Activated B cell treated with CpG ODN at 0.5 μM for 24 hours (primary cell): ENCODE measurements at regions of chr19 and their contacts with region 1.

Region 1: GRCh38 chr19:38849860-38850435 is at the start of gene HNRNPL:
- DNase-seq: peak; percentile 99
- ATAC-seq: peak; percentile 61
- H3K4me3 Mint-ChIP-seq: peak within 1 kb of the TSS; percentile 93
- H3K27ac Mint-ChIP-seq: peak within 1 kb of the TSS; percentile 98
- H3K4me1 Mint-ChIP-seq: peaks cover 61% of the 10 kb centered on the region
- H3K27me3 Mint-ChIP-seq: no peaks in the 10 kb centered on the region
- CTCF ChIP-seq: no peak
- total RNA-seq, gene HNRNPL: 528 and 546 TPM in 2 replicates

Region 2: GRCh38 chr19:38323291-38323690 is 526.7 kb before region 1 on chr19:
- CTCF ChIA-PET with region 1: no interaction called
- POLR2A ChIA-PET with region 1: no interaction called
- intact Hi-C with region 1: no loop called
- DNase-seq: no peak
- ATAC-seq: no peak
- H3K4me3 Mint-ChIP-seq: no peak overlapping the region
- H3K27ac Mint-ChIP-seq: no peak overlapping the region
- H3K4me1 Mint-ChIP-seq: peaks cover 18% of the 10 kb centered on the region
- H3K27me3 Mint-ChIP-seq: no peaks in the 10 kb centered on the region
- CTCF ChIP-seq: no peak

Region 3: GRCh38 chr19:38374429-38375176 is 475.3 kb before region 1 on chr19 and contains the start of gene PSMD8:
- CTCF ChIA-PET with region 1: no interaction called
- POLR2A ChIA-PET with region 1: no interaction called
- intact Hi-C with region 1: loop called (anchors 1 kb)
- DNase-seq: peak; percentile 96
- ATAC-seq: peak; percentile 96
- H3K4me3 Mint-ChIP-seq: peak within 1 kb of the TSS; percentile 100
- H3K27ac Mint-ChIP-seq: peak within 1 kb of the TSS; percentile 96
- H3K4me1 Mint-ChIP-seq: peaks cover 25% of the 10 kb centered on the region
- H3K27me3 Mint-ChIP-seq: no peaks in the 10 kb centered on the region
- CTCF ChIP-seq: no peak
- total RNA-seq, gene PSMD8: 134 and 138 TPM in 2 replicates

Region 4: GRCh38 chr19:38736413-38737280 is 113.3 kb before region 1 on chr19:
- CTCF ChIA-PET with region 1: no interaction called
- POLR2A ChIA-PET with region 1: interaction called, 17 read pairs
- intact Hi-C with region 1: no loop called
- DNase-seq: peak; percentile 64
- ATAC-seq: peak; percentile 60
- H3K4me3 Mint-ChIP-seq: peak overlapping the region; percentile 71
- H3K27ac Mint-ChIP-seq: peak overlapping the region; percentile 12
- H3K4me1 Mint-ChIP-seq: peaks cover 38% of the 10 kb centered on the region
- H3K27me3 Mint-ChIP-seq: no peaks in the 10 kb centered on the region
- CTCF ChIP-seq: no peak

Region 5: DNA sequence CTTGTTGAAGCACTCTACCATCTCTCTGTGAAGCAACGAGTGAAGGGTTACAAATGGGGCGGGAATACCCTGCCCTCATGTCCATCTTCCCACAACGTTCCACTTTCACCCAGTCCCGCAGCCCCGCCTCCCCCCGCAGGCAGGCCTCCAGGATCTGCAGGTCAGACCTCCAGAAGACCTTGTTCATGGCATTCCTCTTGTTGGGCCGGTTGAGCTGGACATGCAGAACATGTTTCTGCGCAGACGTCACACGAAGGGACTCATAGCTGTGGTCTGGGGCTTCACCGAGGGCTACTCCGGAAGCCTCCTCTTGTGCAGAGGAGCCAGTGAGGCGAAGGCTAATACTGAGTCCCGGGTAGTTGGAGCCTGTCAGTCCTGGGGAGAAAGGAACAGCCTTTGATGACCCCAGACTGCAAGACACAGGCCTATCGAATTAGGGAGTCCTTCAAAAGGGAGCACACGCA is 18.8 kb before region 1 on chr19:
- CTCF ChIA-PET with region 1: interaction called, 3 read pairs
- POLR2A ChIA-PET with region 1: interaction called, 118 read pairs
- intact Hi-C with region 1: loop called (anchors 1 kb)
- DNase-seq: no peak
- ATAC-seq: peak; percentile 42
- H3K4me3 Mint-ChIP-seq: peak overlapping the region; percentile 94
- H3K27ac Mint-ChIP-seq: peak overlapping the region; percentile 95
- H3K4me1 Mint-ChIP-seq: peaks cover 31% of the 10 kb centered on the region
- H3K27me3 Mint-ChIP-seq: no peaks in the 10 kb centered on the region
- CTCF ChIP-seq: no peak

Region 6: GRCh38 chr19:38869856-38870607 is 20.1 kb after region 1 on chr19:
- CTCF ChIA-PET with region 1: interaction called, 35 read pairs
- POLR2A ChIA-PET with region 1: interaction called, 463 read pairs
- intact Hi-C with region 1: loop called (anchors 1 kb)
- DNase-seq: peak; percentile 94
- ATAC-seq: peak; percentile 87
- H3K4me3 Mint-ChIP-seq: peak overlapping the region; percentile 92
- H3K27ac Mint-ChIP-seq: peak overlapping the region; percentile 91
- H3K4me1 Mint-ChIP-seq: peaks cover 57% of the 10 kb centered on the region
- H3K27me3 Mint-ChIP-seq: no peaks in the 10 kb centered on the region
- CTCF ChIP-seq: no peak

Region 7: GRCh38 chr19:38899447-38900219 is 49.7 kb after region 1 on chr19 and contains the starts of genes NFKBIB and SIRT2:
- CTCF ChIA-PET with region 1: interaction called, 5 read pairs
- POLR2A ChIA-PET with region 1: interaction called, 14 read pairs
- intact Hi-C with region 1: loop called (anchors 1 kb)
- DNase-seq: peak; percentile 91
- ATAC-seq: peak; percentile 91
- H3K4me3 Mint-ChIP-seq: peak within 1 kb of the TSS; percentile 91
- H3K27ac Mint-ChIP-seq: peak within 1 kb of the TSS; percentile 87
- H3K4me1 Mint-ChIP-seq: peaks cover 41% of the 10 kb centered on the region
- H3K27me3 Mint-ChIP-seq: no peaks in the 10 kb centered on the region
- CTCF ChIP-seq: no peak
- total RNA-seq, gene NFKBIB: 45.5 and 49.5 TPM in 2 replicates
- total RNA-seq, gene SIRT2: 28.4 and 32.7 TPM in 2 replicates

Region 8: DNA sequence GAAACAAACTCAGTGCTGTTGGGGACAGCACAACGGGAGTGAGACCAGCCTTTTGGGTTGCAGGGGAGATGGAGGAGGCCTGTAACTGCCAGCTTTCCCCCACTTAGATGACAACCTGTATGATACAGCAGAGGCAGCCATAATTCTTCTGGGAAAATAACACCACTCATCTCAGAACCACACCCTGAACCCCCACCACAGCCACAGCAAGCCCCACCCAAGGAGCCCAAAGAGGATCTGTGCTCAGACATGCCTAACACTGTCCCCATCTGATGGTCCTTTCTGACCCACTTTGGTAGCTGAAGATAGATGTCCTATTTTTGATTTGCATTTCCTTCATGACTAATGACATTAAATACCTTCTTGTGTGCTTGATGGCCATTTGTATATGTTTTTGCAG is 767.8 kb after region 1 on chr19:
- CTCF ChIA-PET with region 1: no interaction called
- POLR2A ChIA-PET with region 1: no interaction called
- intact Hi-C with region 1: no loop called
- DNase-seq: no peak
- ATAC-seq: no peak
- H3K4me3 Mint-ChIP-seq: no peak overlapping the region
- H3K27ac Mint-ChIP-seq: no peak overlapping the region
- H3K4me1 Mint-ChIP-seq: no peaks in the 10 kb centered on the region
- H3K27me3 Mint-ChIP-seq: peaks cover 40% of the 10 kb centered on the region
- CTCF ChIP-seq: no peak